ENCODE measurements at regions of chr10 and their contacts with region 1.

Region 1: DNA sequence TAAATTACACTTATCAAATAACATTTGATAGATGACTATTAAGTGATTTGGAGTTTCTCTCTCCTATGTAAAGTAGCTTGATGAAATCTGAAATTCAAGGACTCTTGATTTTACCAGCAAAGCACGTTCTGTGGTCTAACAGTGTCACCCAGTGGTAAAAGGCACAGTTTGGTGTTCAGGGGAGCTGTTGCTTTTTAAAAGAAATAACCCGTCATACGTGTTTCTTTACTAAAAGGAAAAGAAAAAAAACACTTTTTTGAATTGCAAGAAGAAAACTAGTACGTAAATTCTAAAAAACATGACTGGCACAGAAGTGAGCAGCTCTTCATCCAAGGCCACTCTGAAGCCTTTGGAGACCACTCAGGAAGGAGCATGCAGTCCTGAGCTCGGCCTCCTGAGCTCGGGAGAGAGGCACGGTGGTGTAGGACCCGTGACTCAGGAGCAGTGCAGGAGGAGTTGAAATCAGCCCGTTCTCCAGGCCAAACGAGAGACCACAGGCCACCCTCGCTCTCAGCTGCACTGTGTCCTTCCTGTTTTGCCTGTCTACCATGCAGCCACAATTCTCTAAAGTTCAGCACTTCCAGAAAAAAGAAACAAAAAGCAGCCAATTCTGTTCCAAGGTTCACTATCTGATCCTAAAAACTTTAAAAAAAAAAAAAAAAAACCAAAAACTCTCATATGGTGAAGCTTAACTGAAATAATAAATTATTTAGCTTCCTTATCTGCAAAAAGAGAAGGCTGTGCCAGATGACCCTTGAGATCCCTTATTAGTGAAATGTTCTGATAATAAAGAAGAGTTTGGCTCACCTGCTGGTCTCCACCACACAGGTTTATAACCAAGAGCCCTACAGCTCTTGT is 212.6 kb upstream of the FRMD4A start:
- DNase-seq: peak; percentile 37 to 68 (median 64)
- ATAC-seq: peak; percentile 84 to 89
- H3K4me3 ChIP-seq: no peak overlapping the region
- H3K27ac ChIP-seq: no peak overlapping the region
- H3K4me1 ChIP-seq: no peaks in the 10 kb centered on the region
- H3K27me3 ChIP-seq: no peaks in the 10 kb centered on the region

Region 2: GRCh38 chr10:14340051-14340744 is 203.1 kb before region 1 on chr10:
- intact Hi-C with region 1: no loop called
- DNase-seq: no peak
- ATAC-seq: no peak
- H3K4me3 ChIP-seq: no peak overlapping the region
- H3K27ac ChIP-seq: no peak overlapping the region
- H3K4me1 ChIP-seq: no peaks in the 10 kb centered on the region
- H3K27me3 ChIP-seq: no peaks in the 10 kb centered on the region

Region 3: GRCh38 chr10:14812271-14812670 is 269.0 kb after region 1 on chr10:
- intact Hi-C with region 1: loop called in 1 of 4 experiments (anchors 10 kb)
- DNase-seq: no peak
- ATAC-seq: no peak
- H3K4me3 ChIP-seq: no peak overlapping the region
- H3K27ac ChIP-seq: no peak overlapping the region
- H3K4me1 ChIP-seq: no peaks in the 10 kb centered on the region
- H3K27me3 ChIP-seq: no peaks in the 10 kb centered on the region

Measured in right cardiac atrium (tissue), 5 donors.